ENCODE measurements at regions of chr2 and their contacts with region 1.

Region 1: GRCh38 chr2:96760036-96760985 is at the start of gene CNNM4:
- DNase-seq: peak; percentile 81 to 95 (median 90)
- ATAC-seq: peak; percentile 95
- H3K4me3 ChIP-seq: peak within 1 kb of the TSS; percentile 72
- H3K4me3 Mint-ChIP-seq: peak within 1 kb of the TSS; percentile 94
- H3K27ac ChIP-seq: peak within 1 kb of the TSS; percentile 62 to 73
- H3K27ac Mint-ChIP-seq: peak within 1 kb of the TSS; percentile 93
- H3K4me1 ChIP-seq: peaks cover 59% of the 10 kb centered on the region
- H3K4me1 Mint-ChIP-seq: peaks cover 52% of the 10 kb centered on the region
- H3K27me3 ChIP-seq: no peaks in the 10 kb centered on the region
- H3K27me3 Mint-ChIP-seq: no peaks in the 10 kb centered on the region
- CTCF ChIP-seq: no peak
- total RNA-seq, gene CNNM4: 7.0 to 7.1 TPM

Region 2: GRCh38 chr2:96505231-96505889 is 255.0 kb before region 1 on chr2 and contains the start of gene NEURL3:
- CTCF ChIA-PET with region 1: no interaction called
- POLR2A ChIA-PET with region 1: no interaction called
- intact Hi-C with region 1: no loop called
- DNase-seq: no peak
- ATAC-seq: no peak
- H3K4me3 ChIP-seq: no peak within 1 kb of the TSS
- H3K4me3 Mint-ChIP-seq: no peak within 1 kb of the TSS
- H3K27ac ChIP-seq: no peak within 1 kb of the TSS
- H3K27ac Mint-ChIP-seq: no peak within 1 kb of the TSS
- H3K4me1 ChIP-seq: peaks cover 37% of the 10 kb centered on the region
- H3K4me1 Mint-ChIP-seq: peaks cover 31% of the 10 kb centered on the region
- H3K27me3 ChIP-seq: peaks cover 5 to 11% of the 10 kb centered on the region in 2 experiments
- H3K27me3 Mint-ChIP-seq: peaks cover 16% of the 10 kb centered on the region
- CTCF ChIP-seq: no peak
- total RNA-seq, gene NEURL3: not detected

Region 3: GRCh38 chr2:96638144-96639121 is 121.9 kb before region 1 on chr2 and contains the start of gene KANSL3:
- CTCF ChIA-PET with region 1: interaction called, 12 read pairs
- POLR2A ChIA-PET with region 1: interaction called, 4 read pairs
- intact Hi-C with region 1: loop called (anchors 1 to 5 kb)
- DNase-seq: peak; percentile 79 to 95 (median 84)
- ATAC-seq: peak; percentile 85
- H3K4me3 ChIP-seq: peak within 1 kb of the TSS; percentile 98
- H3K4me3 Mint-ChIP-seq: peak within 1 kb of the TSS; percentile 99
- H3K27ac ChIP-seq: peak within 1 kb of the TSS; percentile 69 to 75
- H3K27ac Mint-ChIP-seq: peak within 1 kb of the TSS; percentile 96
- H3K4me1 ChIP-seq: peaks cover 29% of the 10 kb centered on the region
- H3K4me1 Mint-ChIP-seq: peaks cover 45% of the 10 kb centered on the region
- H3K27me3 ChIP-seq: no peaks in the 10 kb centered on the region
- H3K27me3 Mint-ChIP-seq: no peaks in the 10 kb centered on the region
- CTCF ChIP-seq: no peak
- total RNA-seq, gene KANSL3: 54.4 to 61.8 TPM

Region 4: GRCh38 chr2:96739633-96740428 is 20.5 kb before region 1 on chr2 and contains the start of gene LMAN2L:
- CTCF ChIA-PET with region 1: interaction called, 20 read pairs
- POLR2A ChIA-PET with region 1: interaction called, 8 read pairs
- intact Hi-C with region 1: loop called (anchors 1 kb)
- DNase-seq: peak; percentile 88 to 99 (median 96)
- ATAC-seq: peak; percentile 98
- H3K4me3 ChIP-seq: peak within 1 kb of the TSS; percentile 94
- H3K4me3 Mint-ChIP-seq: peak within 1 kb of the TSS; percentile 97
- H3K27ac ChIP-seq: peak within 1 kb of the TSS; percentile 21 to 78
- H3K27ac Mint-ChIP-seq: peak within 1 kb of the TSS; percentile 82
- H3K4me1 ChIP-seq: peaks cover 25% of the 10 kb centered on the region
- H3K4me1 Mint-ChIP-seq: peaks cover 35% of the 10 kb centered on the region
- H3K27me3 ChIP-seq: no peaks in the 10 kb centered on the region
- H3K27me3 Mint-ChIP-seq: no peaks in the 10 kb centered on the region
- CTCF ChIP-seq: no peak
- total RNA-seq, gene LMAN2L: 1.1 to 1.8 TPM

Region 5: GRCh38 chr2:96773922-96774321 is 13.6 kb after region 1 on chr2:
- CTCF ChIA-PET with region 1: interaction called, 17 read pairs
- POLR2A ChIA-PET with region 1: interaction called, 33 read pairs
- intact Hi-C with region 1: no loop called
- DNase-seq: peak; percentile 17 to 81 (median 45)
- ATAC-seq: peak; percentile 88
- H3K4me3 ChIP-seq: peak overlapping the region; percentile 68
- H3K4me3 Mint-ChIP-seq: peak overlapping the region; percentile 96
- H3K27ac ChIP-seq: peak overlapping the region; percentile 50 to 70
- H3K27ac Mint-ChIP-seq: peak overlapping the region; percentile 91
- H3K4me1 ChIP-seq: peaks cover 26% of the 10 kb centered on the region
- H3K4me1 Mint-ChIP-seq: peaks cover 22% of the 10 kb centered on the region
- H3K27me3 ChIP-seq: no peaks in the 10 kb centered on the region
- H3K27me3 Mint-ChIP-seq: no peaks in the 10 kb centered on the region
- CTCF ChIP-seq: no peak

Region 6: GRCh38 chr2:96816128-96816835 is 56.0 kb after region 1 on chr2 and contains the start of gene CNNM3:
- CTCF ChIA-PET with region 1: no interaction called
- POLR2A ChIA-PET with region 1: interaction called, 20 read pairs
- intact Hi-C with region 1: loop called (anchors 2 to 5 kb)
- DNase-seq: peak; percentile 90 to 98 (median 96)
- ATAC-seq: peak; percentile 91
- H3K4me3 ChIP-seq: peak within 1 kb of the TSS; percentile 77
- H3K4me3 Mint-ChIP-seq: peak within 1 kb of the TSS; percentile 94
- H3K27ac ChIP-seq: peak within 1 kb of the TSS; percentile 52 to 60
- H3K27ac Mint-ChIP-seq: peak within 1 kb of the TSS; percentile 88
- H3K4me1 ChIP-seq: peaks cover 49% of the 10 kb centered on the region
- H3K4me1 Mint-ChIP-seq: peaks cover 62% of the 10 kb centered on the region
- H3K27me3 ChIP-seq: no peaks in the 10 kb centered on the region
- H3K27me3 Mint-ChIP-seq: no peaks in the 10 kb centered on the region
- CTCF ChIP-seq: peak; percentile 65
- total RNA-seq, gene CNNM3: 48.7 to 53.5 TPM

Region 7: DNA sequence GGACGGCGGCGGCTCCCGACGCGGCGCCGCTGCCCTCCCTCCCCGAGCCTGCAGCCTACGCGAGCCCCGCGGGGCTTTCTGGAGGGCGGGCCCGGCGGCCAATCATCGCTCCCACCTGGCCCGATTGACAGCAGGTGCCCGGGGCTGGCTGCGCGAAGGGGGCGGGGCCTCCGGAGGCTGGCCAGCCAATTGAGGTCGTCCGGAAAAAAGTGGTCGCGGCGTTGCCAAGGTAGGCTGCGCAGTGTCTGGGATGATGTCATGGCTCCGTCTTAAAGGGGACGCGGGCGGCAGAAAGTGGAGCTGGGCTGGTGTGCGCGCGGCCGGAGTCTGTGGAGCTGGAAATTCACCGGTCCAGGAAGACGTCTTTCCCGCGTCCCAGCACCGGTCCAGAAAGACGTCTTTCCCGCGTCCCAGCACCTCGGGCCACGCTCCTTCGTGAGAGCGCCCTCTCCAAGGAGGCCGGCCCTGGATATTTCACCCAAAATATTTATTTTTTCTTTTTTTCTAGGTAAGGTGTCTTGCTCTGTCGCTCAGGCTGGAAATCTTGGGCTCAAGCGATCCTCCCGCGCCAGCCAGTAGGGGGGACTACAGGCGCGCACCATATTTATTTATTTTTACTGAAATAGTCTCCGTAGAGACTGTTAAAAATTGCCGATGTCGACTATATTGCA is 903.8 kb after region 1 on chr2 and contains the start of gene ACTR1B:
- CTCF ChIA-PET with region 1: no interaction called
- POLR2A ChIA-PET with region 1: no interaction called
- intact Hi-C with region 1: loop called in 1 of 2 experiments (anchors 10 kb)
- DNase-seq: peak; percentile 94 to 99 (median 96)
- ATAC-seq: peak; percentile 86
- H3K4me3 ChIP-seq: peak within 1 kb of the TSS; percentile 96
- H3K4me3 Mint-ChIP-seq: peak within 1 kb of the TSS; percentile 100
- H3K27ac ChIP-seq: peak within 1 kb of the TSS; percentile 93 to 98
- H3K27ac Mint-ChIP-seq: peak within 1 kb of the TSS; percentile 99
- H3K4me1 ChIP-seq: peaks cover 34% of the 10 kb centered on the region
- H3K4me1 Mint-ChIP-seq: peaks cover 31% of the 10 kb centered on the region
- H3K27me3 ChIP-seq: no peaks in the 10 kb centered on the region
- H3K27me3 Mint-ChIP-seq: no peaks in the 10 kb centered on the region
- CTCF ChIP-seq: peak; percentile 66
- total RNA-seq, gene ACTR1B: 89.5 to 92.8 TPM

Measured in CD4-positive, alpha-beta T cell (primary cell).